Activated naive CD4-positive, alpha-beta T cell treated with anti-CD3 and anti-CD28 coated beads for 36 hours (primary cell): ENCODE measurements at regions of chr14 and their contacts with region 1.

Region 1: GRCh38 chr14:64503478-64504309 is at the start of gene ZBTB25:
- DNase-seq: peak; percentile 94
- H3K4me3 Mint-ChIP-seq: peak within 1 kb of the TSS; percentile 91
- H3K27ac Mint-ChIP-seq: peak within 1 kb of the TSS; percentile 99
- H3K4me1 Mint-ChIP-seq: peaks cover 53% of the 10 kb centered on the region
- H3K27me3 Mint-ChIP-seq: no peaks in the 10 kb centered on the region
- total RNA-seq, gene ZBTB25: 22.6 to 23.5 TPM

Region 2: GRCh38 chr14:63641473-63642228 is 862.0 kb before region 1 on chr14 and contains the start of gene WDR89:
- CTCF ChIA-PET with region 1: interaction called, 3 read pairs
- intact Hi-C with region 1: loop called (anchors 2 kb)
- DNase-seq: peak; percentile 98
- H3K4me3 Mint-ChIP-seq: peak within 1 kb of the TSS; percentile 76
- H3K27ac Mint-ChIP-seq: peak within 1 kb of the TSS; percentile 91
- H3K4me1 Mint-ChIP-seq: peaks cover 48% of the 10 kb centered on the region
- H3K27me3 Mint-ChIP-seq: no peaks in the 10 kb centered on the region
- total RNA-seq, gene WDR89: 26.7 to 27.7 TPM

Region 3: GRCh38 chr14:64338616-64339316 is 164.9 kb before region 1 on chr14:
- CTCF ChIA-PET with region 1: interaction called, 4 read pairs
- intact Hi-C with region 1: loop called (anchors 1 kb)
- DNase-seq: peak; percentile 95
- H3K4me3 Mint-ChIP-seq: peak overlapping the region; percentile 92
- H3K27ac Mint-ChIP-seq: peak overlapping the region; percentile 86
- H3K4me1 Mint-ChIP-seq: peaks cover 19% of the 10 kb centered on the region
- H3K27me3 Mint-ChIP-seq: no peaks in the 10 kb centered on the region

Region 4: GRCh38 chr14:64465191-64465822 is 38.4 kb before region 1 on chr14 and contains the start of gene AKAP5:
- CTCF ChIA-PET with region 1: no interaction called
- intact Hi-C with region 1: loop called (anchors 1 kb)
- DNase-seq: peak; percentile 68
- H3K4me3 Mint-ChIP-seq: peak within 1 kb of the TSS; percentile 79
- H3K27ac Mint-ChIP-seq: peak within 1 kb of the TSS; percentile 46
- H3K4me1 Mint-ChIP-seq: peaks cover 37% of the 10 kb centered on the region
- H3K27me3 Mint-ChIP-seq: no peaks in the 10 kb centered on the region
- total RNA-seq, gene AKAP5: 0.57 to 0.69 TPM

Region 5: DNA sequence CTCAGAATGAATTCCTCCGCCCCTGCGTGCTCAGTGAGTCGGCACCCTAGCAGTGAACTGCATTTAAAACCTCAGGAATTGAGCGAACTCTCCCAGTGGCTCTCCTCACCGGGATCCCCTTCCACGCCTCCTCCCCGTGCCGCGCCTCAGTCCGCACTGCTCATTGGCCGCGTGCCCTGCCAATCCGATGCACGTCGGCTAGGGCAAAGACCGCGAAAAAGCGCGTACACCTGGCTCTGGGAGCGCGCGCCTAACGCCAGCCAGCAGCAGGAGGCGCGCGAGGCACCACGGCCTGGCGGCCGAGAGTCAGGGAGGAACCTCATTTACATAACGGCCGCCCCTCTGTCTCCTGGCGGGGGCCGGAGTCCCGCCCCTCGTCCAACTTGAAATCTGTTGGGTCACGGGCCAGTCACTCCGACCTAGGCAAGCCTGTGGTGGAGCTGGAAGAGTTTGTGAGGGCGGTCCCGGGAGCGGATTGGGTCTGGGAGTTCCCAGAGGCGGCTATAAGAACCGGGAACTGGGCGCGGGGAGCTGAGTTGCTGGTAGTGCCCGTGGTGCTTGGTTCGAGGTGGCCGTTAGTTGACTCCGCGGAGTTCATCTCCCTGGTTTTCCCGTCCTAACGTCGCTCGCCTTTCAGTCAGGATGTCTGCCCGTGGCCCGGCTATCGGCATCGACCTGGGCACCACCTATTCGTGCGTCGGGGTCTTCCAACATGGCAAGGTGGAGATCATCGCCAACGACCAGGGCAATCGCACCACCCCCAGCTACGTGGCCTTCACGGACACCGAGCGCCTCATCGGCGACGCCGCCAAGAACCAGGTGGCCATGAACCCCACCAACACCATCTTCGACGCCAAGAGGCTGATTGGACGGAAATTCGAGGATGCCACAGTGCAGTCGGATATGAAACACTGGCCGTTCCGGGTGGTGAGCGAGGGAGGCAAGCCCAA is 36.8 kb after region 1 on chr14 and contains the start of gene HSPA2:
- CTCF ChIA-PET with region 1: interaction called, 6 read pairs
- intact Hi-C with region 1: loop called (anchors 1 kb)
- DNase-seq: peak; percentile 97
- H3K4me3 Mint-ChIP-seq: peak within 1 kb of the TSS; percentile 92
- H3K27ac Mint-ChIP-seq: peak within 1 kb of the TSS; percentile 83
- H3K4me1 Mint-ChIP-seq: peaks cover 30% of the 10 kb centered on the region
- H3K27me3 Mint-ChIP-seq: peaks cover 22% of the 10 kb centered on the region
- total RNA-seq, gene HSPA2: 4.1 to 5.1 TPM

Region 6: DNA sequence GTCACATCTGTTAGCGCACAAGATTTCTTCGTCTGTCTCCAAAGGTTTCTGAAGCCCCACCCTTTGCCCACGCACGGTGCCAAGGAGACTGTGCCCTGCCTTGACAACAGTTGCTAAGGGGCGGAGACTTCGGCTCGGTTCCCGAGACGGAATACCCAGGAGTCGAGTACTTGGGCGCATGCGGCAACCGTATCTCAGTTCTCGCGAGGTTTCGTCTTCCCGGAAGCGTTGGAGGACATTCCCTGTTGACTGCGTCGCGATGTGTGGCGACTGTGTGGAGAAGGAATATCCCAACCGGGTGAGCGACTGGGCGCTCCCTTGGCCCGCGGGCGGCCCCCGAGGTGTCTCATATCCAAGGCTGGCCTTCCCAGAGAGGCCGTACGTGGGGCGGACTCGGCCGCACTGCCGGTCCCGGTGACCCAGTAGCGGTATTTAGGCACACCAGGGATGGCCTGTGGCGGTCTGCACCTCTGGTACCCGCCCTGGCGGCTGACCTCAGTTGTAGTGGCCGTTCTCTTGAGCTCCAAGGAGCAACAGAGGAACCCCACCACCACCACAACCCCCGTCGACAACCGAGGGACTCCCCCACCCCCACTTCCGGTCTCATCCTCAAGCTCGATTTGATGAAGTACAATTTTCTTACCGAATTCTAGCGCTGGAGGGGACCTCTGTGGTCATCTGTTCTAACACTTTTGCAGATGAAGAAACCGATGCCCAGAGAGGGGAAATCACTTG is 410.7 kb after region 1 on chr14 and contains the start of gene CHURC1:
- CTCF ChIA-PET with region 1: no interaction called
- intact Hi-C with region 1: loop called (anchors 2 kb)
- DNase-seq: peak; percentile 98
- H3K4me3 Mint-ChIP-seq: peak within 1 kb of the TSS; percentile 78
- H3K27ac Mint-ChIP-seq: peak within 1 kb of the TSS; percentile 88
- H3K4me1 Mint-ChIP-seq: peaks cover 51% of the 10 kb centered on the region
- H3K27me3 Mint-ChIP-seq: no peaks in the 10 kb centered on the region
- total RNA-seq, gene CHURC1: 49.6 to 59.7 TPM